ENCODE measurements at regions of chr1 and their contacts with region 1.

Region 1: GRCh38 chr1:66335859-66336640 is 197.9 kb upstream of the SGIP1 start:
- DNase-seq: peak; percentile 50
- H3K4me3 ChIP-seq: peak overlapping the region; percentile 10
- H3K27ac ChIP-seq: peak overlapping the region; percentile 39
- H3K4me1 ChIP-seq: no peaks in the 10 kb centered on the region
- H3K27me3 ChIP-seq: no peaks in the 10 kb centered on the region
- CTCF ChIP-seq: no peak

Region 2: DNA sequence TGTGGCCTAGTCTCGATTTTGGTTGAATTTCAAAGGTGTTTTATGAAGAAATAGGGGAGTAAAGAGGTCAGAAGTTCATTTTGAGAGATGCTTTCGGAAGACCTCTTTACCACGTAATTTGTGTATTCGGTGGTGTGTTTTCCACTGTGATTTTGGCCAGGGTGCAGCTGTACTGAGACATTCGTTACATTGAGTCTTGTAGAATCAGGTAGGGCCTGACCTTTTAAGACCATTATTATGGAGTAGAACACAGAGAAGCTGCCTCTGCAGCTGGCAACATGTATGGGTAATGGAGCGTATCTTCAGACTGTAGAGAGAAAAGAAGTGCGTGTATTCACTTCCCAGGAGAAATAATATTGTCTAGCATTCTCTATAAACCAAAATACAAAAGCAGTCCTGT is 216.9 kb before region 1 on chr1:
- intact Hi-C with region 1: no loop called
- DNase-seq: no peak
- H3K4me3 ChIP-seq: no peak overlapping the region
- H3K27ac ChIP-seq: no peak overlapping the region
- H3K4me1 ChIP-seq: no peaks in the 10 kb centered on the region
- H3K27me3 ChIP-seq: no peaks in the 10 kb centered on the region
- CTCF ChIP-seq: no peak

Region 3: DNA sequence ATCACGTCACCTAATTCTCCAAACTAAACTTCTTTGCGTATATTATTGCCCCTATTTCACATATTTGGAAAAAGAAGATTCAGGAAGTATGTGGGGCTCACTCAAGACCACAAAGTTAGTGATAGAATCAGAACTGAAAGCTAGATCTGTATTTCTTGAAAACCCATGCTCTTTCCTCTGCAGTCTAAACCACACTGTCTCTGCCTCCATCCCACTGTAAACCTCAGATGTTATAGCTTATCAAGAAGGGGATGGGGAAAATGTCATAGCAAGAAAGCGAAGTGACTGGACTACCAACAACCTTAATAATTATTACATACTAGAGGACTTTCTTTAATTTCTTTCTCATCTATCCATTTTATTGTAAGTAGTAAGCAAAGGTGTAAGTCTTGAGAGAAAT is 59.8 kb before region 1 on chr1:
- intact Hi-C with region 1: loop called (anchors 5 kb)
- DNase-seq: no peak
- H3K4me3 ChIP-seq: no peak overlapping the region
- H3K27ac ChIP-seq: peak overlapping the region; percentile 39
- H3K4me1 ChIP-seq: peaks cover 5% of the 10 kb centered on the region
- H3K27me3 ChIP-seq: no peaks in the 10 kb centered on the region
- CTCF ChIP-seq: no peak

Measured in colonic mucosa (tissue), 4 donors.